Calu3 (cell line): ENCODE measurements at regions of chr3 and their contacts with region 1.

Region 1: GRCh38 chr3:89690646-89691045 is 583.2 kb downstream of the EPHA3 start:
- DNase-seq: no peak
- H3K4me3 Mint-ChIP-seq: no peak overlapping the region
- H3K27ac Mint-ChIP-seq: no peak overlapping the region
- H3K4me1 Mint-ChIP-seq: peaks cover 13% of the 10 kb centered on the region
- H3K27me3 Mint-ChIP-seq: no peaks in the 10 kb centered on the region
- CTCF ChIP-seq: no peak

Region 2: GRCh38 chr3:89795506-89795905 is 104.9 kb after region 1 on chr3:
- CTCF ChIA-PET with region 1: no interaction called
- intact Hi-C with region 1: loop called (anchors 10 kb)
- DNase-seq: no peak
- H3K4me3 Mint-ChIP-seq: no peak overlapping the region
- H3K27ac Mint-ChIP-seq: no peak overlapping the region
- H3K4me1 Mint-ChIP-seq: peaks cover 36% of the 10 kb centered on the region
- H3K27me3 Mint-ChIP-seq: no peaks in the 10 kb centered on the region
- CTCF ChIP-seq: no peak